Naive thymus-derived CD4-positive, alpha-beta T cell (primary cell): ENCODE measurements at regions of chr9 and their contacts with region 1.

Region 1: DNA sequence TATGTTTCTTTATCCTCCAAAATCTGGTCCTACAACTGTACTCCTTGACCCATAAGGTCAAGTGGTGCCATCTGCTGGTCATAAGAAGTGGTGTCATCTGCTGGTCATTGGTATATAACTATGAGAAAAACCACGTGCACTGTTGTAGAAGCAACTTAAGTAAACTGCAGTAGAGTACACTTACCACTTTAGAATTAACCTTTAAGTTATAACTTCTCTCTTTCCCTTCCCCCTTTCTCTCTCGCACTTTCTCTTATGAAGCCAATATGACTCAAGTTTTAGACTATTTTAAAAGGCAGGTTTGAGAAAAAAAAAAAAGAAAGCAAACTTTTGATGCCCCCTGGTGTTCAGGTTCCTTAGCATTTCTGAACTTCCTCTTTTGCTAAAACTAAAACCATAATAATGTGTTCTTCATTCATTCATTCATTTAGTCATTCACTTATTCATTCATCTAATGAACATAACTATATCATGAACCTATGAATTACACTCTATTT is 12.8 kb upstream of the MTAP start:
- DNase-seq: peak in 7 of 9 donors; percentile 60 to 80 (median 72)
- ATAC-seq: peak; percentile 98
- H3K4me3 ChIP-seq: peak overlapping the region; percentile 18
- H3K4me3 Mint-ChIP-seq: peak overlapping the region in 9 of 10 donors; percentile 55 to 85 (median 73)
- H3K27ac ChIP-seq: no peak overlapping the region
- H3K27ac Mint-ChIP-seq: peak overlapping the region in 4 of 9 donors; percentile 11 to 63 (median 36)
- H3K4me1 ChIP-seq: no peaks in the 10 kb centered on the region
- H3K4me1 Mint-ChIP-seq: peaks cover 0 to 7% (median 0%) of the 10 kb centered on the region in 7 donors
- H3K27me3 ChIP-seq: no peaks in the 10 kb centered on the region
- H3K27me3 Mint-ChIP-seq: peaks cover 0 to 45% (median 0%) of the 10 kb centered on the region in 5 donors

Region 2: DNA sequence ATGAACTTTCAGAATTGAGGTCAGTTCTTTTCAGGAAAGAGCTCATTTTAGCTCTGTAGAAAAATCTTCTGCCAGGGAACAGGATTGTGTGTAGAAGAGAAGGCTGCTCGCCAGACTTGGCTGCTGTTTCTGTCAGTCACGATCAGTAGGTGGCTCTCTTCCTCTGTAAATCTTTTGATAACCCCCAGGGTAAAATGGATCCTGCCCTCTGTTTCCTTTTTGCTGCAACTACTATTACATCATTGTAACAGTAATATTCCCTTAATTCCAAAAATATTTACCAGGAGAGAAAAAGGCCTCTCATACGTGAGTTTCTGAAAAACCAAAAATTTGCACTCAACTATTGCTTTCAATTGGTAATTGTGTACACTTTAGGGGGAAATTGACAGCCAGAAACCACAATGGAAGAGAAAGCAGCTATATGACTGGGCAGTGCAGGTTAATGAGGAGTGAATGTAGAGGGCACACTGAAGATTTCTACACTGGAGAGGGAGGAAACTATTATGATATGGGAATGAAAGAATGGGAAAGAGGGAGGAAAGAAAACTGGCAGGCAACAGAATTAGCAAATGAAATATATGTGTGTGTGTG is 635.5 kb before region 1 on chr9:
- CTCF ChIA-PET with region 1: interaction called, 3 read pairs
- POLR2A ChIA-PET with region 1: no interaction called
- intact Hi-C with region 1: loop called in 1 of 2 experiments (anchors 1 kb)
- DNase-seq: peak in 4 of 9 donors; percentile 2 to 23 (median 2)
- ATAC-seq: peak; percentile 58
- H3K4me3 ChIP-seq: no peak overlapping the region
- H3K4me3 Mint-ChIP-seq: no peak overlapping the region
- H3K27ac ChIP-seq: no peak overlapping the region
- H3K27ac Mint-ChIP-seq: no peak overlapping the region
- H3K4me1 ChIP-seq: no peaks in the 10 kb centered on the region
- H3K4me1 Mint-ChIP-seq: peaks cover 2 to 23% (median 3%) of the 10 kb centered on the region in 7 donors
- H3K27me3 ChIP-seq: no peaks in the 10 kb centered on the region
- H3K27me3 Mint-ChIP-seq: peaks cover 0 to 33% (median 3%) of the 10 kb centered on the region in 5 donors

Region 3: DNA sequence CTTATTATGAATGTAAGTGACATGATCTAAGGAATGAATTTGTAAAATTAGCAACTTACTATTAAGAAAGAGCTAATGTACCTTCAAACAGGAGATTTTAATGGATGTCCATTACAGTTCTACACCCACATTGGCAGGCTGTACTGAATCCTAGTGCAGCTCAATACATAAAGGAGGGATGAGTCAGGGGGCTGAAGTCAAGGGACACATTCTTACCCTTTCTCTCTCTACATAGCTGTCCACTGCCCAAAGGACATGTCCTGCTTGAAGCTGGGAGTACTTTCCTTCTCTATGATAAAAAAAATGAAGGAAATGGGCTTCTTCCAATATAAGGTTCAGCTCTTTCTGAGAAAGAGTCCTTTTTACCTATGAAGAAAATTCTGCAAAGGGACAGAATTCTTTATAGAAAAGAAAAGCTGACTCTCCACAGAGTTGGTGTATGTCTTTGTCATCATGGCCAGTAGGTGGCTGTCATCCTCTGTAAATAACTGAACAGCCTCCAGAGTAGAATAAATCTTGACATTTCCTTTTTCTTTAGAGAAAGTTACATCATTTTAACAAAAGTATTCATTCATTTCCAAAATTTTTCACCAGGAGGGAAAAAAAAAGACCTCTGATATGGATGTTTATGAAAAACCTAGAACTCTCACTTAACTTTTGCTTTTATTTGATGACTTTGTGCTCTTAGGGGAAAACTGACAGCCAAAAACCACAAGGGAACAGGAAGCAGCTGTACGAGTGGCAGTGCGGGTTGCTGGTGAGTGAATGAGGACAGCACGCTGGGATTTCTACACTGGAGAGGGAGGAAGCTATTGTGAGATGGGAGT is 536.7 kb before region 1 on chr9:
- CTCF ChIA-PET with region 1: no interaction called
- POLR2A ChIA-PET with region 1: no interaction called
- intact Hi-C with region 1: loop called in 1 of 2 experiments (anchors 5 kb)
- DNase-seq: peak in 5 of 9 donors; percentile 7 to 23 (median 12)
- ATAC-seq: peak; percentile 78
- H3K4me3 ChIP-seq: no peak overlapping the region
- H3K4me3 Mint-ChIP-seq: peak overlapping the region in 6 of 10 donors; percentile 4 to 52 (median 21)
- H3K27ac ChIP-seq: no peak overlapping the region
- H3K27ac Mint-ChIP-seq: no peak overlapping the region
- H3K4me1 ChIP-seq: peaks cover 0 to 3% of the 10 kb centered on the region in 2 donors
- H3K4me1 Mint-ChIP-seq: peaks cover 4 to 14% (median 6%) of the 10 kb centered on the region in 7 donors
- H3K27me3 ChIP-seq: no peaks in the 10 kb centered on the region
- H3K27me3 Mint-ChIP-seq: peaks cover 4 to 60% (median 16%) of the 10 kb centered on the region in 5 donors

Region 4: DNA sequence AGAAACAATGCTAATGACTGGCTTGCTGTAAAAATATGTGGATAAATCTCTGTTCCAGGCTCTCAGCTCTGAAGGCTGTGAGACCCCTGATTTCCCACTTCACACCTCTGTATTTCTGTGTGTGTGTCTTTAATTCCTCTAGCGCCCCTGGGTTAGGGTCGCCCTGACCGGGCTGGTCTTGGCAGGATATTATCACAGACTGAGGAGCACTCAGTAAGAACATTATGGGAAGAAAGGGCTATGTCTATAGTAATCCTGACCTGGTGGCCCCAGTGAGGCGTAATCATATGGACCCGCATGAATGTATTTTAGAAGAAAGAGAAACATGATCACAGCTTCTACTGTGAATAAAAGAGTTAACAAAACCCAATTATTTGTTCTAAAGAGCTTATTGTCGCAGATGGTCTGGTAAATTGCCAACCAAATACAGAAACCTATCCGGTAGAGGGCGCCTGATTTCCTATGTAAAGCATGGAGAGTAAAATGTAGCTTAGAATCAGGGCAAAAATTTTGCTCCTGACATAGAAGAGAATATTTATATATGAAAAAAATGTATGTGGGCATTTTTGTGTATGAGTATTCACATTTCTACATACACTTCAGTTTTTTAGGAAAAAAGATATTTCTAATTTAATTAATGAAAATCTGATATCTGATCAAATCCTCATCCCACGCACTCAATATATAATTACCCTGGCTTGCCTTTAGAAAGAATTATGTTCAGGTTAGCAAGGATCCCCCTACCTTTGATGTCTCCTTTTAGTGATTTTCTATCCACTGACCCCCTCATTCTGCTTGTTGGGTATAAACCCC is 355.2 kb before region 1 on chr9:
- CTCF ChIA-PET with region 1: interaction called, 7 read pairs
- POLR2A ChIA-PET with region 1: no interaction called
- intact Hi-C with region 1: loop called (anchors 1 kb)
- DNase-seq: peak in 7 of 9 donors; percentile 20 to 60 (median 50)
- ATAC-seq: peak; percentile 62
- H3K4me3 ChIP-seq: no peak overlapping the region
- H3K4me3 Mint-ChIP-seq: no peak overlapping the region
- H3K27ac ChIP-seq: no peak overlapping the region
- H3K27ac Mint-ChIP-seq: no peak overlapping the region
- H3K4me1 ChIP-seq: no peaks in the 10 kb centered on the region
- H3K4me1 Mint-ChIP-seq: no peaks in the 10 kb centered on the region
- H3K27me3 ChIP-seq: no peaks in the 10 kb centered on the region
- H3K27me3 Mint-ChIP-seq: peaks cover 22 to 52% (median 34%) of the 10 kb centered on the region in 5 donors

Region 5: GRCh38 chr9:21559424-21560280 is 229.9 kb before region 1 on chr9:
- CTCF ChIA-PET with region 1: interaction called, 4 read pairs
- POLR2A ChIA-PET with region 1: no interaction called
- intact Hi-C with region 1: loop called (anchors 1 to 5 kb)
- DNase-seq: peak; percentile 30 to 71 (median 53)
- ATAC-seq: peak; percentile 87
- H3K4me3 ChIP-seq: peak overlapping the region; percentile 74
- H3K4me3 Mint-ChIP-seq: peak overlapping the region; percentile 88 to 99 (median 96)
- H3K27ac ChIP-seq: peak overlapping the region; percentile 67
- H3K27ac Mint-ChIP-seq: peak overlapping the region in 8 of 9 donors; percentile 34 to 76 (median 70)
- H3K4me1 ChIP-seq: peaks cover 0 to 21% of the 10 kb centered on the region in 2 donors
- H3K4me1 Mint-ChIP-seq: peaks cover 17 to 53% (median 28%) of the 10 kb centered on the region in 7 donors
- H3K27me3 ChIP-seq: peaks cover 9 to 31% of the 10 kb centered on the region in 2 donors
- H3K27me3 Mint-ChIP-seq: peaks cover 4 to 64% (median 41%) of the 10 kb centered on the region in 5 donors

Region 6: DNA sequence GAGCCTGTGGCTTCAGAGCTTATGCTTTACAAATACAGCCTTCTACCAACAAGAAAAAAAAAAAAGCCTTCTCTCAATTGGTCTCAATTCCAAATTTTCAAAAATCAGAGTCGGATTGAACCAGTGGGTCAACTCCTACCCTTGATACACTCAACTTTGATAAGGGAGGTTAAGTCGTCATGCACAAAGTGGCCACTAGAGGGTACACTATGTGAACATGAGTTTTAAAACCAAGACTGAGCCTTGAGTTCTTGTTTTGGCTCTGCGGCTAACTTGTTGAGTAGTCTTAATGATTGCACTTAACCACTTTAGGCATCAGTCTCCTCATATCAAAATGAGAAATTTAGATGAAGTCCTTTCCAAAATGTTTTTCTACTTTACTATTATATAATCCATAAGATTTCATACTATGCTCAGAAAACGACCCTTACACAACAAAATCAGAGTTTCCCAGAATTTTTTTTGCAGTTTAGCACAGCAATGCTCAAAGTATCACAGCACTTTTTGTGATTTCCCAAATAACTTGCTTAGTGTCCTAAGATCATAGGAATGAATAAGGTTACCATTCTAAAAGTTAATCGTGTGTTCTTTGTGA is 80.0 kb before region 1 on chr9:
- CTCF ChIA-PET with region 1: interaction called, 76 read pairs
- POLR2A ChIA-PET with region 1: no interaction called
- intact Hi-C with region 1: loop called (anchors 1 kb)
- DNase-seq: peak; percentile 14 to 56 (median 46)
- ATAC-seq: peak; percentile 88
- H3K4me3 ChIP-seq: no peak overlapping the region
- H3K4me3 Mint-ChIP-seq: no peak overlapping the region
- H3K27ac ChIP-seq: no peak overlapping the region
- H3K27ac Mint-ChIP-seq: no peak overlapping the region
- H3K4me1 ChIP-seq: no peaks in the 10 kb centered on the region
- H3K4me1 Mint-ChIP-seq: peaks cover 0 to 22% (median 15%) of the 10 kb centered on the region in 7 donors
- H3K27me3 ChIP-seq: no peaks in the 10 kb centered on the region
- H3K27me3 Mint-ChIP-seq: peaks cover 0 to 27% (median 0%) of the 10 kb centered on the region in 5 donors

Region 7: GRCh38 chr9:21802195-21803000 is 12.8 kb after region 1 on chr9 and contains the start of gene MTAP:
- CTCF ChIA-PET with region 1: interaction called, 8 read pairs
- POLR2A ChIA-PET with region 1: no interaction called
- intact Hi-C with region 1: loop called in 1 of 2 experiments (anchors 1 kb)
- DNase-seq: peak in 7 of 9 donors; percentile 46 to 81 (median 72)
- ATAC-seq: peak; percentile 88
- H3K4me3 ChIP-seq: peak within 1 kb of the TSS; percentile 92
- H3K4me3 Mint-ChIP-seq: peak within 1 kb of the TSS; percentile 96 to 100 (median 99)
- H3K27ac ChIP-seq: peak within 1 kb of the TSS; percentile 69
- H3K27ac Mint-ChIP-seq: peak within 1 kb of the TSS; percentile 92 to 99 (median 96)
- H3K4me1 ChIP-seq: peaks cover 10 to 25% of the 10 kb centered on the region in 2 donors
- H3K4me1 Mint-ChIP-seq: peaks cover 24 to 52% (median 40%) of the 10 kb centered on the region in 7 donors
- H3K27me3 ChIP-seq: peaks cover 0 to 4% of the 10 kb centered on the region in 2 donors
- H3K27me3 Mint-ChIP-seq: peaks cover 0 to 46% (median 8%) of the 10 kb centered on the region in 5 donors
- total RNA-seq, gene MTAP: 29.0 to 50.7 (median 43.2) TPM